H1 (cell line): ENCODE measurements at regions of chr2 and their contacts with region 1.

Region 1: DNA sequence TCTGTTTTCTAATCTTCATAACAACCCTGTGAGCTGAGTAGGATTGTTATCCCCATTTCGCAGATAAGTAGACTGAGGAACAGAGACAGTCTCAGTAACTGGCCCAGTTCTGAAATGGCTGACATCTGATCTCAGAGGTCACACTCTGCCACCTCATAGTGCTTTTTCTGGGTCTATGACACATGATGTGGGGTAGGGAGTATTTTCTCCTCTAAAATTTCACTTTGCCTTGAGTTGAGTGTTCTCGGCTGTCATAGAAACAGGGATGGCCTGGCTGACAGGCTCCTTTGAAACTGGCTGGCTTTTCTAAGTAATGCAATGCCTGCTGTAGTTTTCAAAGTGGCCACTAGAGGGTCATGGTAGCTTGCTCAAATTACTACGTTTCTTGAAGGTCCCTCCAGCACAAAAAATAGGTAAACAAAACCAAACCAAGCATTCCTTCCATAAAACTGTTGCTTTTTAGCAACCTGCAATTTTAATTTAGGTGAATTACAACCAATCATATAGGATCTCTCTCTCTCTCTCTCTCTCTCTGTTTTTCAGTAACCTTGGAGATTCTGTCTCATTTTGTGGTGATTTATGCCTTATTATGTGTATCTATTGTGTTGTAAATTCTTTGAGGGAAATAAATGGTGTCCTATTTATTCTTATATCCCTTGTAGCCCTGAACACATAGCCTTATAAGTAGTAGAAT is 84.2 kb upstream of the TTN start:
- DNase-seq: peak; percentile 27 to 78
- H3K4me3 ChIP-seq: no peak overlapping the region
- H3K27ac ChIP-seq: no peak overlapping the region
- H3K4me1 ChIP-seq: peaks cover 0 to 3% (median 0%) of the 10 kb centered on the region in 4 experiments; a peak in 2 of 7 replicates
- H3K27me3 ChIP-seq: no peaks in the 10 kb centered on the region
- CTCF ChIP-seq: peak in 2 of 3 experiments; percentile 78 to 84; a peak in 3 of 4 replicates
- EP300 ChIP-seq: no peak
- POLR2A ChIP-seq: no peak
- RAD21 ChIP-seq: peak; percentile 68 to 76

Region 2: GRCh38 chr2:178602901-178603300 is 288.5 kb before region 1 on chr2:
- CTCF ChIA-PET with region 1: no interaction called
- POLR2A ChIA-PET with region 1: no interaction called
- DNase-seq: no peak
- H3K4me3 ChIP-seq: no peak overlapping the region
- H3K27ac ChIP-seq: no peak overlapping the region
- H3K4me1 ChIP-seq: no peaks in the 10 kb centered on the region
- H3K27me3 ChIP-seq: no peaks in the 10 kb centered on the region
- CTCF ChIP-seq: no peak
- EP300 ChIP-seq: no peak
- POLR2A ChIP-seq: no peak
- RAD21 ChIP-seq: no peak

Region 3: DNA sequence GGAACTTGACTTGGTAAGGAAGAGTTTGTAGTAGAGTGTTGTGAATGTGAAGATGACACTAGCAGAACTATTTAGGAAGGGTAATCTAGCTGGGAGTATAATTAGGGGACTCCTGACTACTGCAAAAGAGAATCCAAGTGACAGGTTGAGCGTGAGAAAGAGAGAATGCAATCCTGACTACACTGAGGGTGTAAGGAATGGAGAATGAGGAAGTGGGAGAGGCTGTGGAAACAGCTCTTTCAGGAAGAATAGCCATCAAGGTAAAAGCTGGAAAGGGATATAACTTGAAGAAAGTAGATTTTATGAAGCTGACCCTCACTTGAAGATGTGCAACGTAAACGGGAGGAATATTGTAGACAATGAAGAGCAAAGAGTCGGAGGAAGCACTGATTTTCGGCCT is 43.1 kb before region 1 on chr2:
- CTCF ChIA-PET with region 1: no interaction called
- POLR2A ChIA-PET with region 1: no interaction called
- DNase-seq: no peak
- H3K4me3 ChIP-seq: no peak overlapping the region
- H3K27ac ChIP-seq: no peak overlapping the region
- H3K4me1 ChIP-seq: peaks cover 0 to 13% (median 7%) of the 10 kb centered on the region in 4 experiments; a peak in 3 of 7 replicates
- H3K27me3 ChIP-seq: no peaks in the 10 kb centered on the region
- CTCF ChIP-seq: no peak
- EP300 ChIP-seq: no peak
- POLR2A ChIP-seq: no peak
- RAD21 ChIP-seq: no peak

Region 4: GRCh38 chr2:178881075-178881474 is 10.3 kb before region 1 on chr2:
- CTCF ChIA-PET with region 1: interaction called, 20 read pairs
- POLR2A ChIA-PET with region 1: interaction called, 3 read pairs
- DNase-seq: no peak
- H3K4me3 ChIP-seq: no peak overlapping the region
- H3K27ac ChIP-seq: no peak overlapping the region
- H3K4me1 ChIP-seq: peaks cover 0 to 4% (median 0%) of the 10 kb centered on the region in 4 experiments; a peak in 2 of 7 replicates
- H3K27me3 ChIP-seq: no peaks in the 10 kb centered on the region
- CTCF ChIP-seq: no peak
- EP300 ChIP-seq: no peak
- POLR2A ChIP-seq: no peak
- RAD21 ChIP-seq: no peak